Calu3 (cell line): ENCODE measurements at regions of chr7 and their contacts with region 1.

Region 1: DNA sequence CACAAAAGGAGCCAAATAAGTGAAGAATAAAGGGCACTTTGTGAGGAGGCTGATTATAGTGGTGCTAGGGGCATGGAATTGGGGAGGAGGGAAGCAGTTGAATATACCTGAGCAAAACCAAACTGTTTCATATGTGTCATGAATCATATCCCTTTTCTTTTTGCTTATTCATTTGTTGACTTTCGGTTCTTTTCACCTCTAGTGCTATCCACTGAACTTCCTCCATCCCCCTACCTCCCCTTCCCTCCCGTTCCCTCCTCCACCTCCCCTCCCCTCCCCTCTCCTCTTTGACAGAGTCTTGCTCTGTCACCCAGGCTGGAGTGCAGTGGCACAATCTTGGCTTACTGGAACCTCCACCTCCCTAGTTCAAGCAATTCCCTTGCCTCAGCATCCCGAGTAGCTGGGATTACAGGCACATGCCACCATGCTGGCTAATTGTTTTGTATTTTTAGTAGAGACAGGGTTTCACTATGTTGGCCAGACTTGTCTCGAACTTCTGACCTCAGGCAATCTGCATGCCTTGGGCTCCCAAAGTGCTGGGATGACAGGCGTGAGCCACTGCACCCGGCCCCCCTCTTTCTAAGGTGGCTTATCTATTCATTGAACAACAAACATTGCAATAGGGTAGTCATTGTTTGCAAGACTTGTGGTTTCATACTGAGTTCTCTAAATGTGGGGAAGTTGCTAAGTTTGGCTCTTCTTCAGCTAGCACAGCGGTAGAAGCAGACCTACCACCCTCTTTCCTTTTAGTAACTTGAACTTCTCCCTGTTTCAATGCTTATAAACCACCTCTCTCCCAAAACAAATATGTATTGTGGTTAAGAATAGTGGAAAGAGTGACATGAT is 150.4 kb upstream of the PRPS1L1 start:
- DNase-seq: peak; percentile 88
- H3K4me3 Mint-ChIP-seq: peak overlapping the region; percentile 57
- H3K27ac Mint-ChIP-seq: peak overlapping the region; percentile 92
- H3K4me1 Mint-ChIP-seq: peaks cover 65% of the 10 kb centered on the region
- H3K27me3 Mint-ChIP-seq: no peaks in the 10 kb centered on the region
- CTCF ChIP-seq: no peak

Region 2: GRCh38 chr7:18086165-18087030 is 91.6 kb before region 1 on chr7:
- CTCF ChIA-PET with region 1: no interaction called
- intact Hi-C with region 1: loop called (anchors 5 kb)
- DNase-seq: peak; percentile 73
- H3K4me3 Mint-ChIP-seq: peak overlapping the region; percentile 97
- H3K27ac Mint-ChIP-seq: peak overlapping the region; percentile 74
- H3K4me1 Mint-ChIP-seq: peaks cover 30% of the 10 kb centered on the region
- H3K27me3 Mint-ChIP-seq: no peaks in the 10 kb centered on the region
- CTCF ChIP-seq: peak; percentile 44

Region 3: GRCh38 chr7:18125476-18125875 is 52.6 kb before region 1 on chr7:
- CTCF ChIA-PET with region 1: interaction called, 4 read pairs
- intact Hi-C with region 1: loop called (anchors 2 kb)
- DNase-seq: no peak
- H3K4me3 Mint-ChIP-seq: no peak overlapping the region
- H3K27ac Mint-ChIP-seq: peak overlapping the region; percentile 55
- H3K4me1 Mint-ChIP-seq: peaks cover 51% of the 10 kb centered on the region
- H3K27me3 Mint-ChIP-seq: no peaks in the 10 kb centered on the region
- CTCF ChIP-seq: no peak

Region 4: DNA sequence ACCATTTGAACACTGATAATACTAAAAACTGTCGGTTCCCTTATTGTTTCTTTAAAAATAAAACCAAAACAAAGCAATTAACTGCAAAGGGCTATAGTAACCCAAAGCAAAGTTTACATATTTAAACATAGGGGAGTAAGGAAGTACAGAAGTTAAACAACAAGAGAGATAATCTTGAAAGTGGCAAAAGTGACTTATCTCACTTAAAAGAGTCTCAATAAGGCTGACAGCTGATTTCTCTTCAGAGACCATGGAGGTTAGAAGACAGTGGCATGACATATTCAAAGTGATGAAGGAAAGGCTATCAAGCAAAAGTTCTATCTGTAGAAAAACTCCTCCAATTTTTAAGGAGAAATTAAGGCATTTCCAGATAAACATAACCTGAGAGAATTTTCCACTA is 84.0 kb after region 1 on chr7:
- CTCF ChIA-PET with region 1: no interaction called
- intact Hi-C with region 1: no loop called
- DNase-seq: no peak
- H3K4me3 Mint-ChIP-seq: no peak overlapping the region
- H3K27ac Mint-ChIP-seq: no peak overlapping the region
- H3K4me1 Mint-ChIP-seq: no peaks in the 10 kb centered on the region
- H3K27me3 Mint-ChIP-seq: no peaks in the 10 kb centered on the region
- CTCF ChIP-seq: no peak

Region 5: DNA sequence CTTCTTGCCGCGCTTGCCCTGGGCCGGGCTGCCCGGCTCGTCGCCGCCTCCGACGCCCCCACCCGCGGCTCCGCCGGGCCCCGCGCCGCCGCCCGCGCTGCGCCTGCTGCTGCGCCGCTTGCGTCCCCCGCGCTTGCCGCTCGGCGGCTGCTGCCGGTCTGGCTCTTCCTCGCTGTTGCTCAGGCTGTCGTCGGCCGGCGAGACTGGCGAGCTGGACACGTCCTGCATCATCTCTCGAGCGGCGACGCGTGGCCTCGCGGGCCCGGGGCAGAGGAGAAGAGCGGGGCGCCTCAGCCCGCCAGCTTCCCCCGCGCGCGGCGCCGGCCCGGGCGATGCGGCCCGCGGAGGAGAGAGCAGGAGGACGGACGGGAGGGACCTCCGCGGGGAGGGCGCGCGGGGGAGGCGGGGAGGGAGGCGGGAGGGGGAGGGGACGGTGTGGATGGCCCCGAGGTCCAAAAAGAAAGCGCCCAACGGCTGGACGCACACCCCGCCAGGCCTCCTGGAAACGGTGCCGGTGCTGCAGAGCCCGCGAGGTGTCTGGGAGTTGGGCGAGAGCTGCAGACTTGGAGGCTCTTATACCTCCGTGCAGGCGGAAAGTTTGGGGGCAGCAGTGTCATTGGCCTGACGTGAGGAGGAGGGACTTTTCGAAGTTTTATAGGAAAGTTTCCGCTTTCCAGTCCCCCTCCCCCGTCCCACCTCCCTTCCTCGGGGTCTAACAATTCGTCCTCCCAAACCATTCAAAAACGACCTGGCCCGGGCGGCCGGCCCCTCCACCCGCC is 939.2 kb after region 1 on chr7 and contains the start of gene TWIST1:
- CTCF ChIA-PET with region 1: no interaction called
- intact Hi-C with region 1: no loop called
- DNase-seq: peak; percentile 18
- H3K4me3 Mint-ChIP-seq: peak within 1 kb of the TSS; percentile 70
- H3K27ac Mint-ChIP-seq: peak within 1 kb of the TSS; percentile 48
- H3K4me1 Mint-ChIP-seq: no peaks in the 10 kb centered on the region
- H3K27me3 Mint-ChIP-seq: peaks cover 41% of the 10 kb centered on the region
- CTCF ChIP-seq: no peak
- total RNA-seq, gene TWIST1: 2.4 and 2.9 TPM in 2 replicates